Natural killer cell (primary cell): ENCODE measurements at regions of chr17 and their contacts with region 1.

Region 1: GRCh38 chr17:39153599-39154051 is 2.2 kb upstream of the PLXDC1 start:
- DNase-seq: peak; percentile 92 to 96
- ATAC-seq: peak; percentile 63 to 76 (median 64)
- H3K4me3 ChIP-seq: peak overlapping the region; percentile 91
- H3K4me3 Mint-ChIP-seq: peak overlapping the region; percentile 100
- H3K27ac ChIP-seq: peak overlapping the region; percentile 55
- H3K27ac Mint-ChIP-seq: peak overlapping the region; percentile 100
- H3K4me1 ChIP-seq: peaks cover 35% of the 10 kb centered on the region
- H3K4me1 Mint-ChIP-seq: peaks cover 41 to 48% of the 10 kb centered on the region in 2 donors
- H3K27me3 ChIP-seq: peaks cover 12% of the 10 kb centered on the region
- H3K27me3 Mint-ChIP-seq: peaks cover 18 to 21% of the 10 kb centered on the region in 2 donors
- CTCF ChIP-seq: no peak

Region 2: GRCh38 chr17:38752119-38752929 is 401.3 kb before region 1 on chr17 and contains the start of gene PSMB3:
- intact Hi-C with region 1: loop called (anchors 5 kb)
- DNase-seq: peak; percentile 83 to 99
- ATAC-seq: peak; percentile 84 to 96 (median 89)
- H3K4me3 ChIP-seq: peak within 1 kb of the TSS; percentile 80
- H3K4me3 Mint-ChIP-seq: peak within 1 kb of the TSS; percentile 96
- H3K27ac ChIP-seq: peak within 1 kb of the TSS; percentile 86
- H3K27ac Mint-ChIP-seq: peak within 1 kb of the TSS; percentile 85 to 86
- H3K4me1 ChIP-seq: peaks cover 60% of the 10 kb centered on the region
- H3K4me1 Mint-ChIP-seq: peaks cover 52 to 54% of the 10 kb centered on the region in 2 donors
- H3K27me3 ChIP-seq: peaks cover 28% of the 10 kb centered on the region
- H3K27me3 Mint-ChIP-seq: peaks cover 23 to 28% of the 10 kb centered on the region in 2 donors
- CTCF ChIP-seq: no peak
- total RNA-seq, gene PSMB3: 102 to 129 (median 118) TPM

Region 3: GRCh38 chr17:38898812-38899348 is 254.7 kb before region 1 on chr17:
- intact Hi-C with region 1: loop called (anchors 5 kb)
- DNase-seq: peak; percentile 81 to 91
- ATAC-seq: peak; percentile 75 to 86 (median 78)
- H3K4me3 ChIP-seq: peak overlapping the region; percentile 14
- H3K4me3 Mint-ChIP-seq: peak overlapping the region; percentile 87
- H3K27ac ChIP-seq: peak overlapping the region; percentile 93
- H3K27ac Mint-ChIP-seq: peak overlapping the region; percentile 95
- H3K4me1 ChIP-seq: peaks cover 97% of the 10 kb centered on the region
- H3K4me1 Mint-ChIP-seq: peaks cover 62 to 72% of the 10 kb centered on the region in 2 donors
- H3K27me3 ChIP-seq: no peaks in the 10 kb centered on the region
- H3K27me3 Mint-ChIP-seq: no peaks in the 10 kb centered on the region
- CTCF ChIP-seq: no peak

Region 4: GRCh38 chr17:39045948-39046679 is 107.5 kb before region 1 on chr17:
- intact Hi-C with region 1: no loop called
- DNase-seq: no peak
- ATAC-seq: no peak
- H3K4me3 ChIP-seq: no peak overlapping the region
- H3K4me3 Mint-ChIP-seq: no peak overlapping the region
- H3K27ac ChIP-seq: no peak overlapping the region
- H3K27ac Mint-ChIP-seq: no peak overlapping the region
- H3K4me1 ChIP-seq: no peaks in the 10 kb centered on the region
- H3K4me1 Mint-ChIP-seq: no peaks in the 10 kb centered on the region
- H3K27me3 ChIP-seq: no peaks in the 10 kb centered on the region
- H3K27me3 Mint-ChIP-seq: peaks cover 1 to 5% of the 10 kb centered on the region in 2 donors
- CTCF ChIP-seq: no peak

Region 5: GRCh38 chr17:39069114-39069756 is 84.4 kb before region 1 on chr17:
- intact Hi-C with region 1: loop called (anchors 1 kb)
- DNase-seq: peak in 1 of 2 donors; percentile 75
- ATAC-seq: peak; percentile 71 to 98 (median 93)
- H3K4me3 ChIP-seq: no peak overlapping the region
- H3K4me3 Mint-ChIP-seq: no peak overlapping the region
- H3K27ac ChIP-seq: no peak overlapping the region
- H3K27ac Mint-ChIP-seq: peak overlapping the region in 1 of 2 donors; percentile 11
- H3K4me1 ChIP-seq: peaks cover 5% of the 10 kb centered on the region
- H3K4me1 Mint-ChIP-seq: peaks cover 6 to 12% of the 10 kb centered on the region in 2 donors
- H3K27me3 ChIP-seq: no peaks in the 10 kb centered on the region
- H3K27me3 Mint-ChIP-seq: peaks cover 0 to 3% of the 10 kb centered on the region in 2 donors
- CTCF ChIP-seq: peak; percentile 65